Dendritic cell treated with granulocyte-macrophage colony-stimulating factor and Interleukin-4, amounts not matched to agents 40 ng/mL and 50 ng/mL, for 4 days (primary cell): ENCODE measurements at regions of chr16 and their contacts with region 1.

Region 1: DNA sequence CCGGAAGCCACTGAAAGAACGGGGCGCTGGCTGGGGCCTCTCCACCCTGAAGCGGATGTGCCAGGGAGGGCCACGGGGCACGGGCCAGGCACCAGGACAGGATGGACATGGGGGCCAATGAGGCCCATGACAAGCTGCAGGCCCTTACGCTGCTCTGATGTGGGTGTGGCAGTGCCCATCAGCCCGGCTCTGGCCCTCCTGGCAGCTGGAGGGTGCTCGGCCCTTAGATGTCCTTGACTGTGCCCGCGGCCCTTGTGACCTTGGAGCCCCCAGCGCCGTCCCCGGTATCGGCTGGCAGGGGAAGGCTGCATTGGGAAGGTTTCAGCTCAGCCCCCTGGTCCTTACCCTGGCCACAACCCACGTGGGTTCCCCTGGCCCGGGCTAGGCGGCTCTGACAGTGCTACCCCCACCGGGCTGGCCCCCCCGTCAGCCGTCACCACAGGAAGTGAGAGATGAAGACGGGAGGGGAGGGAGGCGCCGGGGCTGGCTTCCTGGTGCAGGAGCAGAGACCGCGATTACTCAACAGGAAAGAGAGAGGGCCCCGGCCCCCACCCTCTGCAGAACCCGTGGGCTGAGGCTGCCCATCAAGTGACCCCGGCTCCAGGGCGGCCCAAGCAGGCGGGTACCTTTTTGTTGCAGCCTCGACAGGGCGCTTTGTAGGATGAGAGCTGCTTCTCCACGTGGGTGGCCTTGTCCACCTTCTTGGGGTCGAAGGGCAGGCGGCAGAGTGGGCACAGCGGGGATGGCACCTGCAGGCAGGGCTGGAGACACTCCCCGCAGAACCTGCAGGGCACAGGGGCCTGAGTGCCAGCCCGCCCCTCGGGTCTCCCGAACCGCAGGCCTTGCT is 5.3 kb downstream of the RNF166 start:
- H3K4me3 Mint-ChIP-seq: peak overlapping the region; percentile 93
- H3K27ac Mint-ChIP-seq: peak overlapping the region; percentile 89
- H3K4me1 Mint-ChIP-seq: peaks cover 82% of the 10 kb centered on the region
- H3K27me3 Mint-ChIP-seq: no peaks in the 10 kb centered on the region

Region 2: DNA sequence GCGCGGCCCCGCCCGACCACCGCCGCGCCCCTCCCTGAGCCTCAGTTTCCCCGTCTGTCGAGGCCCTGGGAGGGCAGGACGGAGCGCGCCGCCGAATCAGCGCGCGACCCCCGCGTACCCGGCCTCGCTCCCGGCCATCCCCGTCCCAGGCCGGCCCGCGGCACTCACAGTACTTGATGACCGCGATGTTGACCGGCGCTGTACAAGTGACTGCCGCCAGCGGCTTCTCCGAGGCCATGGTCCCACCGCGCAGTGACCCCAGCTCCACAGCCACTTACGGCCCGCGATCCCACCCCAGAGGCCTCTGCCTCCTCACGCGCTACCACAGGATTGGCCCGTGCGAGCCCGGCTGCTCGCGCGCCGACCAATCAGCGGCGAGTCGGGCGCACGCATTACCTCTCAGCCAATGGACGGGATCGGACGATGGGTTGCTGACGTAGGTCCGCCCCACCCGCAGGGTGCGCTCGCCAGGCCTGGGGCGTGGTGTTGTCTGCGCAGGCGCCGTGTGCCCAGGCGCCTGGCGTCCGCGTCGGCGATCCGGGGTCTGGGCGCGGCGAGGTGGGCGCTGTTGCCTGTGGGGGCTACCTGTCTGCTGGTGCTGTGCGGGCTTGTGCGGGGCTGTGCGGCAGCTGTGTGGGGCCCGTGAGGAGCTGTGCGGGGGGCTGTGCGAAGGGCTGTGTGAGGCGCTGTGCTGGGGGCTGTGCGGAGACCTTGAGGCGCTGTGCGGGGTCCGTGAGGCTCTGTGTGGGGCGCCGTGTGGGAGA is 37.8 kb before region 1 on chr16 and contains the start of gene MVD:
- intact Hi-C with region 1: loop called (anchors 1 kb)
- H3K4me3 Mint-ChIP-seq: peak within 1 kb of the TSS; percentile 94
- H3K27ac Mint-ChIP-seq: peak within 1 kb of the TSS; percentile 94
- H3K4me1 Mint-ChIP-seq: peaks cover 35% of the 10 kb centered on the region
- H3K27me3 Mint-ChIP-seq: peaks cover 2% of the 10 kb centered on the region

Region 3: DNA sequence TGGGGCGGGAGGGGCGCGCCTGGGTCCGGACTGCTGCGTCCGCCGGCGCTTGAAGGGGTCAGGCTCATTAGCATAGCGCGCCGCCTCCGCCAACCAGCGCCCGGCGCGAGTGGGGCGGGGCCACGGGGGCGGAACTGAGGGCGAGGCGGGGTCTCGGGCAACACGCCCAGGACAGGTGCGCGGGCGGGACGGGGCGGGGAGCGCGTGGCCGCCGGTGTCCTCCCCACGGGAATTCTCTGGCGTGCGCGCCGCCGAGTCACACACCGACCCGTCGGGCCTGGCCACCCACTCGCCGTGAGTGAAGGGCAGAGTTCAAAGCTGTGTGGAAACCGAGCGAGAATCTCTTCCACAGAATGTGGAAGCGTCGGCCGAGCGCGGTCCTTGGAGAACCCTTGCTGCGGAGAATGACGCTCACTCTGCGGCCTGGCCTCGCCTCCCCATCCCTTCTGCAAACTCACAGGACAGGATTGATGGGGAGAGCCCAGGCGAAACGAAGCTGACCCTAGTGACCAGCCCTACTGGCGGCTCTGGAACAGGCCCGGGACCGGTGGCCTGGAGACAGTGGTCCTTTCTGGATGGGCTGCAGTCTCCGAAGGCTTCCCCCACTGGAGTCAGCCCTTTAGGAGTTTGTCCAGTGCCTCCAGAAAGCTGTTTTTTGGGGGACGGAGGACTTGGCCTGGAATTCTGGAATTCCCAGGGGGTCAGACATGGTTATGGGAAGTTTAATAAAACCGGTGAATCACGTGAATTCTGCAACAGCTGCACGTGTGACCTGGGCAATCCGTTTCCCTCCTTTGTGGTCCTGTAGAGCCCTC is 14.2 kb before region 1 on chr16 and contains the start of gene SNAI3:
- intact Hi-C with region 1: loop called (anchors 2 kb)
- H3K4me3 Mint-ChIP-seq: peak within 1 kb of the TSS; percentile 86
- H3K27ac Mint-ChIP-seq: peak within 1 kb of the TSS; percentile 98
- H3K4me1 Mint-ChIP-seq: peaks cover 82% of the 10 kb centered on the region
- H3K27me3 Mint-ChIP-seq: peaks cover 7% of the 10 kb centered on the region

Region 4: GRCh38 chr16:88713568-88714419 is 12.9 kb after region 1 on chr16:
- intact Hi-C with region 1: no loop called
- H3K4me3 Mint-ChIP-seq: no peak overlapping the region
- H3K27ac Mint-ChIP-seq: no peak overlapping the region
- H3K4me1 Mint-ChIP-seq: peaks cover 14% of the 10 kb centered on the region
- H3K27me3 Mint-ChIP-seq: no peaks in the 10 kb centered on the region